PC-3 (cell line): ENCODE measurements at regions of chr4 and their contacts with region 1.

Region 1: GRCh38 chr4:81466841-81467671 is 4.7 kb downstream of the RASGEF1B start:
- DNase-seq: peak; percentile 88
- ATAC-seq: peak; percentile 45
- H3K4me3 ChIP-seq: no peak overlapping the region
- H3K27ac ChIP-seq: peak overlapping the region; percentile 57
- H3K4me1 ChIP-seq: peaks cover 16% of the 10 kb centered on the region
- H3K27me3 ChIP-seq: no peaks in the 10 kb centered on the region
- CTCF ChIP-seq: peak; percentile 85

Region 2: GRCh38 chr4:81421346-81422218 is 45.5 kb before region 1 on chr4:
- CTCF ChIA-PET with region 1: no interaction called
- POLR2A ChIA-PET with region 1: no interaction called
- intact Hi-C with region 1: loop called (anchors 5 kb)
- DNase-seq: peak; percentile 89
- ATAC-seq: peak; percentile 98
- H3K4me3 ChIP-seq: no peak overlapping the region
- H3K27ac ChIP-seq: peak overlapping the region; percentile 52
- H3K4me1 ChIP-seq: peaks cover 17% of the 10 kb centered on the region
- H3K27me3 ChIP-seq: no peaks in the 10 kb centered on the region
- CTCF ChIP-seq: no peak

Region 3: GRCh38 chr4:81688085-81688484 is 221.0 kb after region 1 on chr4:
- CTCF ChIA-PET with region 1: interaction called, 3 read pairs
- POLR2A ChIA-PET with region 1: no interaction called
- intact Hi-C with region 1: loop called (anchors 1 kb)
- DNase-seq: peak; percentile 40
- ATAC-seq: no peak
- H3K4me3 ChIP-seq: no peak overlapping the region
- H3K27ac ChIP-seq: no peak overlapping the region
- H3K4me1 ChIP-seq: no peaks in the 10 kb centered on the region
- H3K27me3 ChIP-seq: peaks cover 11% of the 10 kb centered on the region; the same call in 1 of the 2 replicates
- CTCF ChIP-seq: peak; percentile 37; the same call in 1 of the 2 replicates

Region 4: GRCh38 chr4:82201805-82202641 is 735.0 kb after region 1 on chr4:
- CTCF ChIA-PET with region 1: no interaction called
- POLR2A ChIA-PET with region 1: no interaction called
- intact Hi-C with region 1: loop called (anchors 5 kb)
- DNase-seq: peak; percentile 57
- ATAC-seq: 0 out of 2 replicates have a peak, but pooled peaks have one; percentile 37
- H3K4me3 ChIP-seq: no peak overlapping the region
- H3K27ac ChIP-seq: no peak overlapping the region
- H3K4me1 ChIP-seq: no peaks in the 10 kb centered on the region
- H3K27me3 ChIP-seq: peaks cover 22% of the 10 kb centered on the region; the same call in 1 of the 2 replicates
- CTCF ChIP-seq: peak; percentile 89